Activated T-helper 2 cell treated with anti-CD3 and anti-CD28 coated beads, Interferon-gamma antibody, Interleukin-2, Interleukin-4, amounts not matched to agents 10 μg/mL and 5 μg/mL and 100 μg/mL, durations not matched to agents 14 hours and 24 hours and 36 hours (primary cell): ENCODE measurements at regions of chr1 and their contacts with region 1.

Region 1: GRCh38 chr1:52056163-52056936 is at the start of gene BTF3L4:
- DNase-seq: peak; percentile 93
- H3K4me3 Mint-ChIP-seq: peak within 1 kb of the TSS; percentile 100
- H3K27ac Mint-ChIP-seq: peak within 1 kb of the TSS; percentile 100
- H3K4me1 Mint-ChIP-seq: peaks cover 41% of the 10 kb centered on the region
- H3K27me3 Mint-ChIP-seq: no peaks in the 10 kb centered on the region
- total RNA-seq, gene BTF3L4: 40.8 and 43.1 TPM in 2 replicates

Region 2: GRCh38 chr1:51878616-51879336 is 177.6 kb before region 1 on chr1 and contains the start of gene NRDC:
- intact Hi-C with region 1: loop called (anchors 1 kb)
- DNase-seq: peak; percentile 99
- H3K4me3 Mint-ChIP-seq: no peak within 1 kb of the TSS
- H3K27ac Mint-ChIP-seq: no peak within 1 kb of the TSS
- H3K4me1 Mint-ChIP-seq: peaks cover 32% of the 10 kb centered on the region
- H3K27me3 Mint-ChIP-seq: peaks cover 10% of the 10 kb centered on the region
- total RNA-seq, gene NRDC: 177 and 182 TPM in 2 replicates

Region 3: GRCh38 chr1:52033190-52034049 is 22.9 kb before region 1 on chr1 and contains the start of gene KTI12:
- intact Hi-C with region 1: loop called (anchors 1 kb)
- DNase-seq: peak; percentile 83
- H3K4me3 Mint-ChIP-seq: peak within 1 kb of the TSS; percentile 93
- H3K27ac Mint-ChIP-seq: peak within 1 kb of the TSS; percentile 90
- H3K4me1 Mint-ChIP-seq: peaks cover 30% of the 10 kb centered on the region
- H3K27me3 Mint-ChIP-seq: no peaks in the 10 kb centered on the region
- total RNA-seq, gene KTI12: 16.5 and 18.3 TPM in 2 replicates

Region 4: DNA sequence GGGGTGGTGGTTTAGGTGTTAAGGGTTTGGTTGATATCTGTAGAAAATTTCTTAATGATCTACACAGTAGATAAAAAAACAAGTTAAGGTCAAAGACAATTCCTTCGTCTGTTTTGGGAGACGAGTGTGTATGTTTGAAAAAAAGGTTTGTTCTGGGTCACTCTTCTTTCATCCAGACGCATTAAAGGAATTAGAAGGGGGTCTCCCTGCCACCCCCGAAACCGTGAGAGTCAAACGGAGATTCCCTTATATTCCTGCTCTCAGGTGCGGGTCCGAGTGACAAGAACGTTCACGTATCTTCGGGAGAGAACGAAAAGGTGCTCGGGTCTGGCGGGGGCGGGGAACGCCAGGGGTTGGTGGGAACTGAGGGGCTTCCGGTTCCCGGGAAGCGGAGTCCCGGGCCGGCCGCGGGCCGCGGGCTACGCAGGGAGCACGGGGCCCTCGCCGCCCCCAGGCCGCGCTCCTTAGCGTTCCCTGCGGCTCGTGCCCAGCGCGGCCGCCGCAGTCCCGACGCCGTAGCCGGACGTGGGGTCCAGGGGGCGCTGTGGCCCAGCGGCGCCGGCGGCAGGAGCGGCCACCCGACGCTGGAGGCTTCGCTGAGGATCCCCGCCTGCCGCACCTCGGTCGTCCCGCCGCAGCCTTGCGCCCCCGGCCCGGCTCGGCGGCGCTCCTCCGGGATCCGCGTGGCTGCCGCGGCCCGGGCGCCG is 85.3 kb after region 1 on chr1 and contains the start of gene ZFYVE9:
- intact Hi-C with region 1: loop called (anchors 5 kb)
- DNase-seq: peak; percentile 57
- H3K4me3 Mint-ChIP-seq: peak within 1 kb of the TSS; percentile 76
- H3K27ac Mint-ChIP-seq: peak within 1 kb of the TSS; percentile 56
- H3K4me1 Mint-ChIP-seq: peaks cover 27% of the 10 kb centered on the region
- H3K27me3 Mint-ChIP-seq: peaks cover 28% of the 10 kb centered on the region
- total RNA-seq, gene ZFYVE9: 3.7 and 4.0 TPM in 2 replicates

Region 5: GRCh38 chr1:52365746-52366516 is 309.6 kb after region 1 on chr1 and contains the start of gene CC2D1B:
- intact Hi-C with region 1: loop called (anchors 5 kb)
- DNase-seq: peak; percentile 100
- H3K4me3 Mint-ChIP-seq: peak within 1 kb of the TSS; percentile 94
- H3K27ac Mint-ChIP-seq: peak within 1 kb of the TSS; percentile 93
- H3K4me1 Mint-ChIP-seq: peaks cover 34% of the 10 kb centered on the region
- H3K27me3 Mint-ChIP-seq: no peaks in the 10 kb centered on the region
- total RNA-seq, gene CC2D1B: 36.0 and 38.1 TPM in 2 replicates

Region 6: DNA sequence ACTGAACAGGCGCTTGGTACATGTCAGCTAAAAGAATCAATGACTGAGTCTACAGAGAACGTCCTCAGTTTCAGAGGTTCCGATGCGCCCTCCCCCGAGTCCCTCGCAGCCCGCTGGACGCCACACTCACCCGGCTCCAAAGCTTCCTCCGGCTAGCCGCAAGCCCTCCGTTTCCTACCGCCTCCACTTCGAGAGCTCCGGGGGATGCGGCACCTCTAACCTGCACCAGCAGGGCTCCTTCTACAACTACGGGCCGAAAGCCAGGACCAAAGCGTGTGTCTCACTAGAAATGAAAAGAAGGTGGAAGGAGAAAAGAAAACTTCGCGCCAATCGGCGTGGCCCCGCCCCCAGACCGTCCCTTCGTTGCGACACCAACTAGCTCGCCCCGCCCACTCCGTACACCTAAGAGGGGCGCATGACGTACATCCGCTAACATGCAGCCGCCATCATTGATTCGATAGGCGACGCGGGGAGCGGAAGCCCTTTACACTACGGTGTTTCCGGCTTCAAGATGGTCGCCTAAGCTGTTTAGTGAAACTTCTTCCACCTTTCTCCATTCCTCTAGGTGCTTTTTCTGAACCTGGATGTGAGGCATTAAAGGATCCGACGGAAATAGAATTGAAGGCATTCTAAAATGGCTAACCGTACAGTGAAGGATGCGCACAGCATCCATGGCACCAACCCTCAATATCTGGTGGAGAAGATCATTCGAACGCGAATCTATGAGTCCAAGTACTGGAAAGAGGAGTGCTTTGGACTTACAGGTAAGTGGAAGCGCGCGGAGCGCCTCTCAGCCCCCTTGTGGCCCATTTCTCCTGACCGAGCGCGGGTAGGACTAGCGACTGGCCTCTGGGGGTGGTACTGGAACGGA is 348.0 kb after region 1 on chr1 and contains the starts of genes ORC1 and PRPF38A:
- intact Hi-C with region 1: loop called (anchors 10 kb)
- DNase-seq: peak; percentile 96
- H3K4me3 Mint-ChIP-seq: peak within 1 kb of the TSS; percentile 98
- H3K27ac Mint-ChIP-seq: peak within 1 kb of the TSS; percentile 97
- H3K4me1 Mint-ChIP-seq: peaks cover 42% of the 10 kb centered on the region
- H3K27me3 Mint-ChIP-seq: no peaks in the 10 kb centered on the region
- total RNA-seq, gene ORC1: 36.2 and 38.9 TPM in 2 replicates
- total RNA-seq, gene PRPF38A: 96.6 and 98.1 TPM in 2 replicates

Region 7: DNA sequence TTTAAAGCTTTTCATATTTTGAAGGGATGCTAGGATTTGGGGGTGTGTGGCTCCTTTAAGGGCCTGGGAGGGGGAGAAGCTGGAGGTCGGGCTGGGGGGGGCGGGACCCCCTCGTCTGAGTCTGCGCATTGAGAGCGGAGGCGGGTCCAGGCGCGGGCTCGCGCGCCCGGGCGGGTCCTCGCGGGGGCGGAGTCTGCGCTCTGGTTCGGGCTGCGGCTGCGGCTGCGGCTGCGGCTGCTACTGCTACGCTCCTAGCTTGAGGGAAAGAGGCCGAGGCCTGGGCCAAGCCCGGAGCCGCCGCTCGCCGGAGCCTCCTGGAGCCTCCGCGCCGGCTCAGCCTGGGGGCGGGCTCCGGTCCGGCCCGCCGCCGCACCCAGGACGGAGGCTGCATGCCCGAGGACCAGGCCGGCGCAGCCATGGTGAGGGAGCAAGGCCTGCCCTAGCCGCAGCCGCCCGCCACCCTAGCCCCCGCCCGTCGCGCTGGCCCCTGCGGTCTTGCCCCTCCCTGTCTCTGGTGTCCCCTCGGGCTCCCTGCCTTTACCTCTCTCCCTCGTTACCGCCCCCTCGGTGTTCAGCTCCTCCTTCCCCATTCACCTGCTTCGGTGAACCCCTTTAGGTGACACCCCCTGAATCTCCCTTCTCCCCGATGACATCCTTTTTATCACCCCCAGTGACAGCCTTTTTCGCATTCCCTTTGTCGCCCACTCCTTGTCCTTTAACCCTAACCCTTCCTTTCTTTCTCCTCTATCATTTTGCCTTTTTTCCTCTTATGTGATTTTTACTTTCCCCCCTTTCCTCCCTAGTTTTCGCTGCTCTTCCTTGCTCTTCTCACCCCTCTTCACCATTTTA is 670.1 kb after region 1 on chr1 and contains the start of gene ZYG11B:
- intact Hi-C with region 1: loop called (anchors 1 kb)
- DNase-seq: peak; percentile 87
- H3K4me3 Mint-ChIP-seq: peak within 1 kb of the TSS; percentile 93
- H3K27ac Mint-ChIP-seq: peak within 1 kb of the TSS; percentile 70
- H3K4me1 Mint-ChIP-seq: peaks cover 25% of the 10 kb centered on the region
- H3K27me3 Mint-ChIP-seq: no peaks in the 10 kb centered on the region
- total RNA-seq, gene ZYG11B: 12.7 and 13.2 TPM in 2 replicates